Transverse colon (tissue), 4 donors: ENCODE measurements at regions of chr20 and their contacts with region 1.

Region 1: DNA sequence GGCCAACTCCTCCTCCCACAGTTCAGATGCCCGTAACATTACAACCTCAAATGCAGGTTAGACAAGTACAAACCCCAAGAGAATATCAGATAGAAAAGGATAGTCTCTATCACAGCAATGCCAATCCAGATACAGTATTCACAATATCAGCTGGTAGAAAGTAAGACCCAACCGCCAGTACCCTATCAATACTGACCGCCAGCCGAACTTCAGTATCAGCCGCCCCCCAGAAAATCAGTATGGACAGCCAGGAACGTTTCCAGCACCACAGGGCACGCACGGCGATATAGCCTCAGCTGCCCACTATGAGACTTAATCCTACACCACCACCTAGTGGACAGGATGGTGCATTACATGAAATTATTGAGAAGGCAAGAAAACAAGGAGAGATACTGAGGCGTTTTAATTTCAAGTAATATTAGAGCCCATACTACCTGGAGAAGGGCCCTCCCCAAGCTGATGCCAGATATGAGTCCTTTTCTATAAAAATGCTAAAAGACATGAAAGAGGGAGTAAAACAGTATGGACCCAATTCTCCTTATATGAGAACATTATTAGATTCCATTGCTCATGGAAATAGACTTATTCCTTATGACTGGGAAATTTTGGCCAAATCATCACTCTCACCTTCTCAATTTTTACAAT is 17.6 kb upstream of the EIF2S2 start:
- DNase-seq: peak; percentile 52
- H3K4me3 ChIP-seq: no peak overlapping the region
- H3K27ac ChIP-seq: no peak overlapping the region
- H3K4me1 ChIP-seq: peaks cover 0 to 3% (median 1%) of the 10 kb centered on the region in 4 donors
- H3K27me3 ChIP-seq: no peaks in the 10 kb centered on the region
- CTCF ChIP-seq: peak; percentile 79 to 88 (median 84)
- EP300 ChIP-seq: no peak
- POLR2A ChIP-seq: no peak

Region 2: DNA sequence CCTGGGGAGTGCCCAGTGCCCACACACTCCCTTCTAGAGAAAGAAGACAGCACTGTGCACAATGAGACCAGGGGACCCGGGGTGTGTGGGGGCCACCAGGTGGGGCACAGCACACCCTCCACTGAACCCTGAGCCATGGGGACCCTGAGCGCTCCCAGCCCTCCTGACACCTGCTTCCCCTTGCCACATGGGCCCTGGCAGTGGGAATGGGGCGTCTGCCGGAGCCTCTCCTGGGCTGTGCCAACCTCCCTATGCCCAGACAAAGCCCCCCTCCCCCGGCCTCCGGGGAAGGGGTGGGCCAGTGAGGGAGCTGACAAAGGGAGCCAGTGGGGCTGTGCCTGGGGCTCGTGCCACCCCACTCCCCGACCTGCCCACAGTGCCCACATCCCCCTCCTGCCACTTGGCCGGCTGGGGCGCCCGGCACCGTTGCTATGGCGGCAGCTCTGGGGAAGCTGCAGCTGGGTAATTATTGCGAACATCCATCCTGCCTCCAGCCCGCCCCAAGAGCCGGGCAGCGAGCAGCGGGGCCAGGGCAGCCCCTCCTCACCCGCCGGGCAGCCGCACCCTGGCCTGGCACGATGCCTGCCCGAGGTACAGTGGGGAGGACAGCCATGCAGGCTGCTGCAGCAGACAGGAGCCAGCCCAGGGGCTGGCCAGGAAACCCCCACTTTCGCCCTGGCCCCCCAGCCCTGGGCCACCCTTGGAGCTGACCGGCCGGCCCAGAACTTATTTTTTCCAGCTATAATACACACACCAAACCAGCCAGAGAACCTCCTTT is 1502.6 kb before region 1 on chr20:
- in situ Hi-C with region 1: no loop called
- intact Hi-C with region 1: loop called (anchors 10 kb)
- DNase-seq: peak; percentile 24
- H3K4me3 ChIP-seq: no peak overlapping the region
- H3K27ac ChIP-seq: no peak overlapping the region
- H3K4me1 ChIP-seq: peaks cover 8 to 12% (median 10%) of the 10 kb centered on the region in 4 donors
- H3K27me3 ChIP-seq: peaks cover 20% of the 10 kb centered on the region
- CTCF ChIP-seq: no peak
- EP300 ChIP-seq: no peak
- POLR2A ChIP-seq: no peak

Region 3: GRCh38 chr20:33862709-33863403 is 266.8 kb before region 1 on chr20:
- in situ Hi-C with region 1: no loop called
- intact Hi-C with region 1: loop called (anchors 5 kb)
- DNase-seq: peak; percentile 62
- H3K4me3 ChIP-seq: peak overlapping the region in 1 of 4 donors; percentile 12
- H3K27ac ChIP-seq: no peak overlapping the region
- H3K4me1 ChIP-seq: peaks cover 5 to 21% (median 6%) of the 10 kb centered on the region in 4 donors
- H3K27me3 ChIP-seq: no peaks in the 10 kb centered on the region
- CTCF ChIP-seq: peak; percentile 68 to 80 (median 72)
- EP300 ChIP-seq: no peak
- POLR2A ChIP-seq: no peak

Region 4: GRCh38 chr20:34058831-34059230 is 70.8 kb before region 1 on chr20:
- in situ Hi-C with region 1: no loop called
- intact Hi-C with region 1: no loop called
- DNase-seq: no peak
- H3K4me3 ChIP-seq: no peak overlapping the region
- H3K27ac ChIP-seq: no peak overlapping the region
- H3K4me1 ChIP-seq: peaks cover 0 to 7% (median 0%) of the 10 kb centered on the region in 4 donors
- H3K27me3 ChIP-seq: no peaks in the 10 kb centered on the region
- CTCF ChIP-seq: no peak
- EP300 ChIP-seq: no peak
- POLR2A ChIP-seq: no peak